ENCODE measurements at regions of chr11 and their contacts with region 1.

Region 1: DNA sequence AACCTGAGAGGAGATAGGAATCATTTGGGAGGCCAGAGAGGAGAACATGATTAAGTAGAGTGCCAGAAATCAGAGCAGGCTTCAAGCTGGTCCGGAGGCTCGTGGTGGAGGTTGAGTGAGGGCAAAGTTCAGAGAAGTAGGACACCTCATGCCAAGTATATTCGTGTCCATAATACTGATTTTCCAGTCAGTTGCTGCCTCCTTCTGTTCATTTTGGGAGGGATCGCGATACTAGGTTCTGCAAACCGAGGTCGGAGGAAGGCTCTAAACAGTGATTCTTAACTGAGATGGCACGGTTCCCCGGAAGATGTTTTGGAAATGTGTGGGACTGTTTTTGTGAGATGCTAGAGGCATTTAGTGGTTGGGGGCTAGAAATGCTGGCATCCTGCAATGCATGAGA is 13.6 kb upstream of the CD3E start:
- DNase-seq: peak in 7 of 9 experiments; percentile 16 to 74 (median 37)
- ATAC-seq: peak; percentile 43
- H3K4me3 ChIP-seq: no peak overlapping the region
- H3K4me3 Mint-ChIP-seq: no peak overlapping the region
- H3K27ac ChIP-seq: no peak overlapping the region
- H3K27ac Mint-ChIP-seq: no peak overlapping the region
- H3K4me1 ChIP-seq: peaks cover 7% of the 10 kb centered on the region
- H3K4me1 Mint-ChIP-seq: peaks cover 12% of the 10 kb centered on the region
- H3K27me3 ChIP-seq: no peaks in the 10 kb centered on the region
- H3K27me3 Mint-ChIP-seq: no peaks in the 10 kb centered on the region
- CTCF ChIP-seq: peak; percentile 42

Region 2: GRCh38 chr11:118258410-118258809 is 32.5 kb before region 1 on chr11:
- CTCF ChIA-PET with region 1: interaction called, 11 read pairs
- POLR2A ChIA-PET with region 1: interaction called, 3 read pairs
- intact Hi-C with region 1: loop called in 1 of 2 experiments (anchors 2 kb)
- DNase-seq: peak in 1 of 9 experiments; percentile 29
- ATAC-seq: no peak
- H3K4me3 ChIP-seq: no peak overlapping the region
- H3K4me3 Mint-ChIP-seq: no peak overlapping the region
- H3K27ac ChIP-seq: no peak overlapping the region
- H3K27ac Mint-ChIP-seq: no peak overlapping the region
- H3K4me1 ChIP-seq: peaks cover 28% of the 10 kb centered on the region
- H3K4me1 Mint-ChIP-seq: peaks cover 33% of the 10 kb centered on the region
- H3K27me3 ChIP-seq: no peaks in the 10 kb centered on the region
- H3K27me3 Mint-ChIP-seq: no peaks in the 10 kb centered on the region
- CTCF ChIP-seq: no peak

Region 3: GRCh38 chr11:118277306-118277705 is 13.6 kb before region 1 on chr11:
- CTCF ChIA-PET with region 1: interaction called, 13 read pairs
- POLR2A ChIA-PET with region 1: no interaction called
- intact Hi-C with region 1: no loop called
- DNase-seq: no peak
- ATAC-seq: no peak
- H3K4me3 ChIP-seq: no peak overlapping the region
- H3K4me3 Mint-ChIP-seq: no peak overlapping the region
- H3K27ac ChIP-seq: no peak overlapping the region
- H3K27ac Mint-ChIP-seq: no peak overlapping the region
- H3K4me1 ChIP-seq: peaks cover 9% of the 10 kb centered on the region
- H3K4me1 Mint-ChIP-seq: peaks cover 20% of the 10 kb centered on the region
- H3K27me3 ChIP-seq: no peaks in the 10 kb centered on the region
- H3K27me3 Mint-ChIP-seq: no peaks in the 10 kb centered on the region
- CTCF ChIP-seq: no peak

Measured in CD8-positive, alpha-beta T cell (primary cell).